Activated CD8-positive, alpha-beta T cell treated with anti-CD3 and anti-CD28 coated beads for 36 hours (primary cell): ENCODE measurements at regions of chr15 and their contacts with region 1.

Region 1: GRCh38 chr15:85618956-85619491 is 175.7 kb downstream of the KLHL25 start:
- DNase-seq: peak; percentile 76
- ATAC-seq: peak; percentile 94
- H3K4me3 Mint-ChIP-seq: no peak overlapping the region
- H3K27ac Mint-ChIP-seq: no peak overlapping the region
- H3K4me1 Mint-ChIP-seq: peaks cover 25% of the 10 kb centered on the region
- H3K27me3 Mint-ChIP-seq: no peaks in the 10 kb centered on the region
- CTCF ChIP-seq: no peak

Region 2: GRCh38 chr15:85306946-85307708 is 311.9 kb before region 1 on chr15:
- CTCF ChIA-PET with region 1: no interaction called
- POLR2A ChIA-PET with region 1: no interaction called
- intact Hi-C with region 1: no loop called
- DNase-seq: no peak
- ATAC-seq: no peak
- H3K4me3 Mint-ChIP-seq: no peak overlapping the region
- H3K27ac Mint-ChIP-seq: no peak overlapping the region
- H3K4me1 Mint-ChIP-seq: peaks cover 13% of the 10 kb centered on the region
- H3K27me3 Mint-ChIP-seq: no peaks in the 10 kb centered on the region
- CTCF ChIP-seq: no peak

Region 3: GRCh38 chr15:85603703-85604102 is 15.3 kb before region 1 on chr15:
- CTCF ChIA-PET with region 1: interaction called, 19 read pairs
- POLR2A ChIA-PET with region 1: interaction called, 4 read pairs
- intact Hi-C with region 1: no loop called
- DNase-seq: no peak
- ATAC-seq: no peak
- H3K4me3 Mint-ChIP-seq: no peak overlapping the region
- H3K27ac Mint-ChIP-seq: no peak overlapping the region
- H3K4me1 Mint-ChIP-seq: peaks cover 25% of the 10 kb centered on the region
- H3K27me3 Mint-ChIP-seq: no peaks in the 10 kb centered on the region
- CTCF ChIP-seq: no peak

Region 4: DNA sequence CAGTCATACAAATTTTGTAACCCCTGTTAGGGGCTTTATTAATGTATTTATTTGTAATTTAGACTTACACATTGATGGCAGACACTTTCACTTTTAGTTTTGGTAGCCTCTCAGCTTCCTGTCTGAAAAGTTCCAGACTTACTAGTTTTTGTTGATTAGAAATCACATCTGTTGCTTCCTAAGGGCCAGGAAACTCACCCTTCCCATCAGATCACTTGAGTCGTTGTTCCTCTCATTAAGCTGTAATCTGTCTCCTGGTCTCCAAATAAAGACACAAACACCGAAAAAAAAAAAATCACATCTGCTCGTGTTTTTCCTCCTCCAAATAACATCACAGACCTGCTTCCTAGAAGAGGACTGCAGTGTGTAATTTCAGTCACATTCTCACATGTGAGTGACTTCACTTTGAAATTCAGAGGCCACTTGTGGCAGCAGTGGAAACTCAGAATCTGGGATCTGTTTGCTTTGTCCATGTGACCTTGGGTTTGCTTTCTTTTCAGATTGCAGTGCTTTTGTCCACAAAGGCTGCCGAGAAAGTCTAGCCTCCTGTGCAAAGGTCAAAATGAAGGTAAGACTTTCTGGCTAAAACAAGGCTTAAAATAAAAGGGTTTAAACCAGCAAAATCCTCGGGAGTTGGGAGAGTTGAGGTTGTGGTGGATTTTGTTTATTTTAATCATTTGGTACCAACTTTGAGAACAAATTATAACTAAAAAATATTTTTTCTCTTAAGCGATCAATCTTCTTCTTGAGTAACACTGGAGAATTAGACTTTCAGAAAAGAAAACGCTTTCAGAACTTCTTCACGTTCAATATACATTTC is 88.7 kb after region 1 on chr15:
- CTCF ChIA-PET with region 1: interaction called, 4 read pairs
- POLR2A ChIA-PET with region 1: no interaction called
- intact Hi-C with region 1: loop called (anchors 5 kb)
- DNase-seq: peak; percentile 56
- ATAC-seq: peak; percentile 10
- H3K4me3 Mint-ChIP-seq: peak overlapping the region; percentile 78
- H3K27ac Mint-ChIP-seq: peak overlapping the region; percentile 97
- H3K4me1 Mint-ChIP-seq: peaks cover 81% of the 10 kb centered on the region
- H3K27me3 Mint-ChIP-seq: no peaks in the 10 kb centered on the region
- CTCF ChIP-seq: no peak

Region 5: DNA sequence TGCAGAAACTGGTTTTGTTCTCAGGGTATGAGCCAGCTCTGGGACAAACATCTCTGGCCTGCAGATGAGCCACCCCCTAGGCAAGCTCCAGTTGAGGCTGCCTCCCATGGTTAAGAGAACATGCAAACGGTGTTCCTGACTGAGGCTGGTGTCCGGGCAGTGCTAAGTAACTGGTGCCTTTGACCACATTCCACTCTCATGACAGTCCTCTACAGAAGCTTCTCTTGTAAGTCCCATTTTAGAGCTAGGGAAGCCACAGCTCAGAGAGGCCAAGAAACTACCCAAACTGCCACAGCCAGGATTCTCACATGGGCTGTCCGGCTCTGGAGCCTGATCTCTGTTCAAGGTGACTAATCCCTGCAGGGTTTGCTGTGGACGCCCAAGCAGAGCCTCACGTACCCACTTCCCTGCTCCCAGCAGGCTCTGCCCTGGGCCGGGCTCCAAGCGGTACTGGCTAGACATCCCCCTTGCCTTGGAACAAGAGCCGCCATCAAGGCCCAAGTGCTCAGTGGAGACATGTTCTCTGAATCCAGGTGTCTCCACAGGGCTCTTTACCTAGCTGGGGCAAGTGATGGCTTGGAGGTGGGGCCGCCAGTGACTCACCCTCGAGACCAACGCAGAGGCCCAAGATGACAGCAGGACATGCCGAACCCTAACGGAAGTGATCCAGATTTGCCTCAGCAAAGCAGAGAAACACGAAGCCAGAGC is 151.1 kb after region 1 on chr15:
- CTCF ChIA-PET with region 1: no interaction called
- POLR2A ChIA-PET with region 1: no interaction called
- intact Hi-C with region 1: no loop called
- DNase-seq: no peak
- ATAC-seq: no peak
- H3K4me3 Mint-ChIP-seq: no peak overlapping the region
- H3K27ac Mint-ChIP-seq: no peak overlapping the region
- H3K4me1 Mint-ChIP-seq: no peaks in the 10 kb centered on the region
- H3K27me3 Mint-ChIP-seq: no peaks in the 10 kb centered on the region
- CTCF ChIP-seq: no peak